Keratinocyte (primary cell): ENCODE measurements at regions of chr14 and their contacts with region 1.

Region 1: DNA sequence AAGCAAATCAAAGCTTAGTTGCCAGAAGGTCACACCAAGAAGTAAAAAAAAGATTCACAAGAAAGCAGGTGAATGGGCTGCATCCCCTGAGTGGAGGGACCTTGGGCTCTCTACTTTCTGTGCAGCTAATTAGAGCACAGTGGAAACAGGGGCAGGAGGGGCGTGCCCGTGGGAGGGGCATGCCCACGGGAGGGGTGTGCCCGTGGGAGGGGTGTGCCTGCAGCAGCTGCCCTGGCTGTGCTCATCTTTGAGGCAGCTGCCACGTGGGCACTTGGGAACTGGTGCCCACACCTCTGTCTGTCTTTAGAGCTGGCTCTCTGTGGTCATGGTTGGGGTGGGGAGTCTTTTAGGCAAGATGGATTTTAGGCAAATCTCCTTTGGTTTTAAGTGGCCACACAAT is 60.0 kb downstream of the EML1 start:
- DNase-seq: no peak
- H3K4me3 ChIP-seq: no peak overlapping the region
- H3K27ac ChIP-seq: no peak overlapping the region
- H3K4me1 ChIP-seq: no peaks in the 10 kb centered on the region
- H3K27me3 ChIP-seq: peaks cover 12% of the 10 kb centered on the region
- CTCF ChIP-seq: no peak

Region 2: DNA sequence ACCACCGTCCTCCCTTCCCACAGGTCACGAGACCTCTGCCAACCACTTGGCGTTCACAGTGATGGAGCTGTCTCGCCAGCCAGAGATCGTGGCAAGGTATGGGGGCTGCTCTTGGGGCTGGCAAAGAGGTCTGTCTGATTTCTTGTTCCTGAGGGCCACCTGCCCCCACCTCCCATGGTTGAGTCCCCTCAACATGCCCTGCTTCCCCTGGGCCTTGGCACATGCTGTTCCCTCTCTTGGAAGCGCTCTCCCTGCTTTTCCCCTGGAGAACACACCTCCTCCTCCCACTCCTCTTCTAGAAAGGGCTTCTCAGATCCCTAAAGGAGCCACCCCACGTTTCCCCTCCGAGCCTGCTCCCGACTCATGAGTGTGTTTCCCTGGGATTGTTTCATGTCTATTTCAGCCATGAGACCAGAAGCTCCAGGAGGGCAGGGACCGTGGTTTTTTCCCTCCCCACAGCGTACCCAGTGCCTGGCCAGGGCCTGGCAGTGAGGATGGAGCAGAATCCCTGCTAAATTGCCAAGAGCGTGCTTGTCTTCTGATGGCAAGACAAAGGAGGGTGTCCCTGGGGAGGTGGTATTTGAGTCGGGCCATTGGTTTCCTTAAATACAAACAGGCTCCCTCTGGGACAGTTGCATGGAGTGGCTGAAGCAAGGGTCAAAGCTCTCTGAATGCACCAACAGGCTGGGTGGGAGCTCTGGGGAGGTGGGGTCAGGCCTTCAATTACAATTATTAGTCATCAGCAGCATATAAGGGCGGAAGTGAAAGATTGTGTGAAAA is 135.0 kb before region 1 on chr14:
- dilution Hi-C with region 1: loop called (anchors 25 kb)
- DNase-seq: no peak
- H3K4me3 ChIP-seq: no peak overlapping the region
- H3K27ac ChIP-seq: no peak overlapping the region
- H3K4me1 ChIP-seq: no peaks in the 10 kb centered on the region
- H3K27me3 ChIP-seq: peaks cover 9% of the 10 kb centered on the region
- CTCF ChIP-seq: no peak